ENCODE measurements at regions of chr16 and their contacts with region 1.

Region 1: DNA sequence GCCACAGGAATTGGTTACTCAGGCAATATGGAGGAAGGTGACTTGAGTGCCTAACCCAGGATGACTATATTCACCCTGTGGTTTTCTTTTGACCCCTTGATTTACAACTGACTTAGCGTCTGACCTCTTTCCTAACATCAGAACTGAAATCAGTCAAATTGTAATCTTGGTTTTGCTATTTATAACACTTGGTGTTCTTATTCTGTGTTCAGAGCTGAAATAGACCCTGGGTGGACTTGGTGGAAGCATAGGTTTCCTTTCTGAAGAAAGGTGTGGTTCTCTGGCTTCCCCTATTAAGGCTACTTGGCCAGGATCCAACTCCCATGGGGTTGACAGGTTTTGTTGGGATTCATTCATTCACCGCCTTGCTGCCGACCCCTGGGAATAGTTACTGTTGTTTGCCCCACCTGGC is 80.8 kb downstream of the CLEC16A start:
- DNase-seq: no peak
- H3K4me3 Mint-ChIP-seq: no peak overlapping the region
- H3K27ac Mint-ChIP-seq: peak overlapping the region; percentile 92
- H3K4me1 Mint-ChIP-seq: peaks cover 42% of the 10 kb centered on the region
- H3K27me3 Mint-ChIP-seq: no peaks in the 10 kb centered on the region

Region 2: DNA sequence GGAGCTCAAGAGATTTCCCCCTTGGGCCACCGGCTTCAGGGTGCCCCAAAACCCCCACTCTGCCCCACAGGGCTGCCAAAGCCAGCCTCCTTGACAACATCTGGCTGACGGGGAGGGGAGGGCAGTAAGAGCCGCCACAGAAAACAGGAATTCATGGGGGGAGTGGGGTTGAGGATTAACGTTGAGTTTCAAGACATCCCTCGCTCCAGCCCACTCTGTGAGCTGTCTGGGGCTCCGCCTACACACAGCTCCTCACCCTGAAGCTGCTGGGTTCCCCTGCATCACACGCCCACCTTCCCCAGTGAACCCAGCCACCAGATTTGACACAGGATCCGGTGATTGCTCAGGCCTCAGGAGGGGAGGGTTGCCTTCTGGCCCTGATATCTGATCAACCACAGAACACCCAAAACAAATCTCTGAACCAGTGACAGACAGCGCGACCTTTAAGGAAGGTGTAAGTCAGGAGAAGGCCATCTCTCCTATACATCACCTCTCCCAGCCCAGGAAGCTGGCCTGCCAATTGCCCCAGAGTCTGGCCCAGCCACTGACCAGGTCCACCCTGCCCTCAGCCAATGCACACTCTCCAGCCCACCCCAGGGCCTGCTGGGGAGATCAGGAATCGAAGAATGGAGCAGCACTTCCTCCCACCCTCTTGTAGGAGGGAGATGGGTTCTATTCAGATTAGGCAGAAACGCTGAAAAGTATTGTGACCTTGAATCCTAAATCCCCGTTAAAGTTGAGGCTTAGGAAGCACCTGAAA is 51.3 kb after region 1 on chr16:
- intact Hi-C with region 1: loop called (anchors 1 kb)
- DNase-seq: peak; percentile 70
- H3K4me3 Mint-ChIP-seq: peak overlapping the region; percentile 31
- H3K27ac Mint-ChIP-seq: peak overlapping the region; percentile 94
- H3K4me1 Mint-ChIP-seq: peaks cover 95% of the 10 kb centered on the region
- H3K27me3 Mint-ChIP-seq: no peaks in the 10 kb centered on the region

Region 3: DNA sequence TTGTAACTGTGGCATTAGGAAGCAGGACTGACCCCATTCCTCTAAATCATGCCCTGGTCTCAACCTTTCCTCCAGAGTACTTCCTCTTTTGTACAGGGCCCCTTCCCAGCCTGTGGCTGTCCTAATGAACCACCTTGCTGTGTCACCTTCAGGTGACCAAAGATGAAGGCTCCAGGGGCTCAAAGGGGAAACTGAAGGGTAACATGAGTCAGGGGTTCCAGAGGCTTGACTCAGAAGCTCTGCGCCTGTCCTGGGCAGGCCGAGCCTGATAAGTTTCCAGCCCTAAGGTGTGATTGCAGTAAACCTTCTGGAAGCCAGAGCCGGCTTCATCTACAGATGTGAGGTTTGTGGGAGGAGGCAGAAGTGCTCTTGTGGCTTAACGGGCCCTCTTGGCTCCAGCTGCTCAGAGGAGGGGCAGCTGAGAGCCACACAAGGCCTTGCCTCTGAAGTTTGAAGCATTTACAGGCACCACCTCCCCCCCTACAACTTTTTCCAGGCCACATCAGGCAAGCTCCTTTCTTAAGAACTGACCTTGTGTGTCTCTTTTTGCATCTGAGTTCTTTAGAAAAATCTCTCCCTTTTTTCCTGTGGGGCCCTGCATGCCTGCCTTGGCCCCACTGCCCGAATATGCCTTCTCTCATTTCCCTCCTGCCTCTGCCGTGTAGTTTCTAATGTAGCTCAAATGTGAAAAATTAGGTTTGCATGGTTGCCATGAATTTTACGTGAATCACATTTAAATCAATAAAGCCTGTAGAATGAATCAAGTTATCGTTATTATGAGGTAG is 69.1 kb after region 1 on chr16:
- intact Hi-C with region 1: loop called (anchors 2 kb)
- DNase-seq: peak; percentile 67
- H3K4me3 Mint-ChIP-seq: peak overlapping the region; percentile 50
- H3K27ac Mint-ChIP-seq: peak overlapping the region; percentile 98
- H3K4me1 Mint-ChIP-seq: peaks cover 75% of the 10 kb centered on the region
- H3K27me3 Mint-ChIP-seq: no peaks in the 10 kb centered on the region

Region 4: GRCh38 chr16:11379420-11379819 is 354.3 kb after region 1 on chr16:
- intact Hi-C with region 1: no loop called
- DNase-seq: no peak
- H3K4me3 Mint-ChIP-seq: no peak overlapping the region
- H3K27ac Mint-ChIP-seq: peak overlapping the region; percentile 74
- H3K4me1 Mint-ChIP-seq: peaks cover 26% of the 10 kb centered on the region
- H3K27me3 Mint-ChIP-seq: no peaks in the 10 kb centered on the region